Naive thymus-derived CD8-positive, alpha-beta T cell (primary cell): ENCODE measurements at regions of chr20 and their contacts with region 1.

Region 1: GRCh38 chr20:41136680-41137613 is at the start of gene PLCG1:
- DNase-seq: peak; percentile 68 to 88 (median 84)
- ATAC-seq: peak; percentile 61 to 72
- H3K4me3 Mint-ChIP-seq: peak within 1 kb of the TSS; percentile 90 to 99 (median 95)
- H3K27ac Mint-ChIP-seq: peak within 1 kb of the TSS; percentile 92 to 99 (median 96)
- H3K4me1 Mint-ChIP-seq: peaks cover 40 to 71% (median 59%) of the 10 kb centered on the region in 4 donors
- H3K27me3 Mint-ChIP-seq: no peaks in the 10 kb centered on the region
- polyA plus RNA-seq, gene PLCG1: 37.4 to 92.5 (median 53.2) TPM

Region 2: DNA sequence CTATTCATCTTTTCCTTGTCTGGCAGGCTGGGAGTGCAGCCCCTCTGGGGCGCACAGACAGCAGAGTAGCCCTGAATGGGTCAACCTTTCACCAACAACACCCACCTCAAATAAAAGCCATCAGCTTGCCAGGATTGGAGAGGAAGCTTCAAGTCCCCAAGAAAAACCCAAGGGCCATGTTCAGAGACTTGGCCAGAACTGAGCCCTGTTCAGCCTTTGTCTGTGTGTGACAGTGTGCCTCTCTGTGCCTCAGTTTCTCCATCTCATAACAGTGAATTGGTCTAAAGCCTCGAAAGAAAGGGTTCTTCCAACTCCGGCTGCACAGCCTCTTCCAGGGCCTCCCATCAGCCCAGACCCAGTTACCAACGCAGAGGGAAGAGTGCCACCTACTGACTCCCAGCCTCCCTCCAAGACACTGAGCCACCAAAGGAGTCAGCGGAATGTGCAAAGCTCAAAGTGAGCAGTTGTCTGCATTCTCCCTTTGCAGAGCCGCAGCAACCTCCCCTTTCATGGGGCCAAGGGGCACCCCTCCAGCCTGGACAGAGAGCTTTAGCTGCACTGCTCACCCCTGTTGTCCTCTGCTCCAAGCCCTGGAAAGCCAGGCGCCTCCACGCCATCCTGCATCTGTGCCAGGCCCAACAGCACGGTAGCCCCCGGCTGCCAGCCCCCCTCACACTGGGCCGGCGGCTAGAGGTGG is 191.0 kb before region 1 on chr20:
- POLR2A ChIA-PET with region 1: no interaction called
- DNase-seq: no peak
- ATAC-seq: no peak
- H3K4me3 Mint-ChIP-seq: peak overlapping the region in 1 of 10 donors; percentile 45
- H3K27ac Mint-ChIP-seq: peak overlapping the region in 1 of 10 donors; percentile 9
- H3K4me1 Mint-ChIP-seq: peaks cover 0 to 18% (median 0%) of the 10 kb centered on the region in 4 donors
- H3K27me3 Mint-ChIP-seq: peaks cover 0 to 15% (median 1%) of the 10 kb centered on the region in 5 donors

Region 3: GRCh38 chr20:41173161-41173721 is 36.3 kb after region 1 on chr20:
- POLR2A ChIA-PET with region 1: interaction called, 734 read pairs
- DNase-seq: peak; percentile 47 to 82 (median 68)
- ATAC-seq: peak; percentile 90 to 94
- H3K4me3 Mint-ChIP-seq: peak overlapping the region in 2 of 10 donors; percentile 11 to 26
- H3K27ac Mint-ChIP-seq: peak overlapping the region; percentile 34 to 94 (median 90)
- H3K4me1 Mint-ChIP-seq: peaks cover 24 to 57% (median 43%) of the 10 kb centered on the region in 4 donors
- H3K27me3 Mint-ChIP-seq: peaks cover 0 to 2% (median 0%) of the 10 kb centered on the region in 5 donors

Region 4: DNA sequence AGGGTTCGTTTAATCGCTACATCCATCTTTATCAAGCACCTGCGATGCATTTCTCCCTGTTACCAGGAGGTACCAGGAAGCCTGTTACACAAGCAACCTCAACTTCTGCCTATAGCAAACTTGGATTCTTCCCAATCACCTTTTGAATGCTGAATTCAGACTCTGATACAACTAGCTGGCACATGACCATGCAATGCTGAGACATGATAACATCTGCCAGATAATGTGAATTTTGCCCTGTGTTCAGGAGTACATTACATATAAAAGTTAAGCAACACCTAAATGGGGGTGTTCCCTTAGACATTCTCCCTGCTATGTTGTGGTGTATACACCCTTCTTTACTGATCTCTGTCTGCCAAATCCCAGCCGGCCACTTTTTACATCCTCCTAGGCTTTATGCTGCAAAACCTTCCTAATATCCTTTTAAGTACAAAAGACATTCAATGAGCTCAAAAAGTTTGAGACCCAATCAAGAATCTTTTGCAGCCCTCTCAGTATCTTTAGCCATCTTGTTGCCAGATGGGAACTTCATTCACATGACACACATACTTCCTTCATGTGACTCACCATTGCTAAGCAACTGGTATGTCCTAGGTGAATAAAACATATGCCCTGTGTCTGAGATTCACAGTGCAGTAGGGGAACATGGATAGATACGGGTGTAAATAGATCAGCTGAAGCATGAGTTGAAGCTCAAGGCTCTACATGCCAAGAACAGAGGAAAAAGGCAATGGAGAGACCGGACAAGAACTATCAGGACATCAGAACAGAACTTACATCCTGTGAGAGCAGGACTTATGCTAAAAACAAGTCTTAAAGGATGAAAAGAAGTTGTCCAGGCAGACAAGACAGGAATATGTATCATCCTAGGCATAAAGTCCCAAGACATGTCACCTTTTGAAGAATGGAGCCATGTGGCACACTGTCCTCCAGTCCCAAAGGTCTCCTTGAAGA is 96.3 kb after region 1 on chr20:
- POLR2A ChIA-PET with region 1: interaction called, 23 read pairs
- DNase-seq: no peak
- ATAC-seq: no peak
- H3K4me3 Mint-ChIP-seq: peak overlapping the region in 6 of 10 donors; percentile 32 to 84 (median 61)
- H3K27ac Mint-ChIP-seq: peak overlapping the region in 6 of 10 donors; percentile 16 to 74 (median 38)
- H3K4me1 Mint-ChIP-seq: peaks cover 14 to 30% (median 28%) of the 10 kb centered on the region in 4 donors
- H3K27me3 Mint-ChIP-seq: no peaks in the 10 kb centered on the region